Posterior vena cava (tissue), 2 donors: ENCODE measurements at regions of chr7 and their contacts with region 1.

Region 1: GRCh38 chr7:14024406-14024805 is 34.9 kb upstream of the ETV1 start:
- DNase-seq: no peak

Region 2: DNA sequence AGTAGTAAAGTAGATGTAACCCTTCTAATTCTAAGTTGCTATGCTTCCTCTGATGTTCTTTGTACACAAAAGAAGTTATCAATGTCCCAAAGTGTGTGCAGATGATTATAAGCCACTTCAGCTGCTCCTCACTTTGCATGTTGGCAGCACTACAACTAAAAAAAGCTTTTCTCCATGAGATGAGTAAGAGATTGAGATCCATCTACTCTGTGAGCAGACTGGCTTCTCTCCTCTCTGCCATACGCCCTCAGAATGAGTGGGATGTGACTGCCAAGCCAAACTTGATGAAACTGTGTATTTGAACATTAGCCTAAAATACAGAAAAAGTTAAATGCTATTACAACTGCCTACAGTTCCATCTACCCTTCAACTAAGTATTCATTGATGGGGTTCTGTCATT is 67.9 kb after region 1 on chr7:
- intact Hi-C with region 1: loop called in 1 of 2 experiments (anchors 2 kb)
- DNase-seq: no peak

Region 3: GRCh38 chr7:14739168-14739852 is 714.9 kb after region 1 on chr7:
- intact Hi-C with region 1: no loop called
- DNase-seq: no peak